Naive thymus-derived CD8-positive, alpha-beta T cell (primary cell): ENCODE measurements at regions of chr17 and their contacts with region 1.

Region 1: DNA sequence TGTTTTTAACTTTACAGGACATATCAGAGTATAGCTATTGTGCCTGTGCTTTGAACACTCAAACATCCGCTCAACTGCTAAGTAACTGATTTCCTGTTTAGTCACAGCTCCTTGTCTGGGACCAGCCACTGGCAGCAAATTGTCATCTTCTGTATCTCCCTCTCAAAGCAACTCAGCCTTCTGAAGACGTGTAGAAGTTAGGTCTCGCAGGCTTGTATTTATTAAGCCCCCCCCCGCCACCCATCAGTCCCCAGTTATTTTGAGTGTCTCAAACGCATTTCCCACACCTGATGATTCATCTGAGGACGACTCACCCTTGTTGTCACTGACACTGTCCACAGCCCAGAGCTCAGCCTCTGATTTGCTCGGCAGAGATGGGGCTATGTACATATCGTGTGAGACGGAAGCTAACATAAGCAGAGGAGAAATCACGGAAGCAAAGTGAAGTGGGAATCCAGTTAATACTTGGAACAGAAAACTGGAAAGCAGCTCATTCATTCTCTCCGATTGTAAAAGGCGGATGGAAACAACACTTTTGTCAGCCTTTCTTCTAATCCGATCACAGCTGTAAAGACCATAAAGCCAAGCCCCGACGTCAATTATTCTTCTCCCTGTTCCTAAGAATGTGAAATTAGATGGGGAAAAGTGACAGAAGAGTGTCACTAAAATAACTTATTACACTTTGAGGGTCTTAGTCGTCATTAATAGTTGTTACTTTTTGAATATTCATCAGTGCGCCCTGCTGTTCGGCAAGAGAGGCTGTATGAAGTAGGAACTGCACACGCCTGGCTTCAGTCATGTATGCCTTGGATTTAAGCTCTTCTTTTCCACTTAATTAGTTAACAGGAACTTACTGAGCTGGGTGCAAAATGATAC is 64.2 kb downstream of the PITPNC1 start:
- DNase-seq: peak; percentile 47 to 89 (median 77)
- ATAC-seq: peak; percentile 87 to 93
- H3K4me3 Mint-ChIP-seq: peak overlapping the region; percentile 72 to 91 (median 83)
- H3K27ac Mint-ChIP-seq: peak overlapping the region; percentile 95 to 100 (median 99)
- H3K4me1 Mint-ChIP-seq: peaks cover 48 to 93% (median 89%) of the 10 kb centered on the region in 4 donors
- H3K27me3 Mint-ChIP-seq: no peaks in the 10 kb centered on the region

Region 2: GRCh38 chr17:67312265-67312664 is 129.0 kb before region 1 on chr17:
- POLR2A ChIA-PET with region 1: no interaction called
- DNase-seq: no peak
- ATAC-seq: no peak
- H3K4me3 Mint-ChIP-seq: no peak overlapping the region
- H3K27ac Mint-ChIP-seq: no peak overlapping the region
- H3K4me1 Mint-ChIP-seq: no peaks in the 10 kb centered on the region
- H3K27me3 Mint-ChIP-seq: peaks cover 0 to 3% (median 0%) of the 10 kb centered on the region in 5 donors

Region 3: GRCh38 chr17:67353929-67354574 is 87.2 kb before region 1 on chr17:
- POLR2A ChIA-PET with region 1: no interaction called
- DNase-seq: no peak
- ATAC-seq: no peak
- H3K4me3 Mint-ChIP-seq: no peak overlapping the region
- H3K27ac Mint-ChIP-seq: peak overlapping the region in 2 of 10 donors; percentile 48 to 51
- H3K4me1 Mint-ChIP-seq: peaks cover 8 to 26% (median 17%) of the 10 kb centered on the region in 4 donors
- H3K27me3 Mint-ChIP-seq: no peaks in the 10 kb centered on the region

Region 4: DNA sequence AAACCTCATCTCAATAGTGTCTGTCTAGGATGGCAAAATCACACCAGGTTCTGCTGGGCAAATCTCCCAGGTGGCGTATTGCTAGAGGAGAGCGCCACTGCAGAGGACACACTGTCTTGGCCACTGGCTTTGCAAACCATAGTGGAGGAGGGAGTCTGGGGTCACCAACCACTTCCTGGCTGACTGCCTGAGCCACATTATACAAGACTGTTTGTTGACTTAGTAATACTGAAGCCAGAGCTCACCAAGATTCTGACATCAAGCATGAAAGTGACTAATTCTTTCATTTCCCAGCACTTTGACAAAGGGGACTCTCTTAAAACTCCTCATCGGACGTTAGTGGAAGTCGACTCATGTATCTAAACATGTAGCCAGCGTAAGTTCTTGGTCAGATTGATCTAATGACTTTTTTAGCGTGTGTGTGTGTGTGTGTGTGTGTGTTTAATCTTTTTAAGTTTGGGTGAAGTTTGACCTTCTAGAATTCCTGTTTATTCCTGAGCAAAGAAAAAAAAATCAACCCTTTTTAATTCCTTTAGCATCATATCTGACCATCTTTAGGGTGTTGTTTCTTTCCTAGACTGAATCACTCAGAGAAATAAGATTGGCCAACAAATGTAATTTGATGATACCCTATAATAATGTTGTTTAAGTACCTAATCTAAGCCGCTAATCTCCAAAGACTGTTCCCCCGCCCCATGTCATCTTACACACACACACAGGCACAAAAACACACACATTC is 50.5 kb before region 1 on chr17:
- POLR2A ChIA-PET with region 1: interaction called, 40 read pairs
- DNase-seq: peak; percentile 32 to 76 (median 54)
- ATAC-seq: peak; percentile 80 to 83
- H3K4me3 Mint-ChIP-seq: peak overlapping the region; percentile 59 to 88 (median 80)
- H3K27ac Mint-ChIP-seq: peak overlapping the region; percentile 90 to 98 (median 94)
- H3K4me1 Mint-ChIP-seq: peaks cover 30 to 90% (median 77%) of the 10 kb centered on the region in 4 donors
- H3K27me3 Mint-ChIP-seq: no peaks in the 10 kb centered on the region

Region 5: GRCh38 chr17:67400193-67400592 is 41.1 kb before region 1 on chr17:
- POLR2A ChIA-PET with region 1: interaction called, 31 read pairs
- DNase-seq: peak in 4 of 10 donors; percentile 50 to 74 (median 66)
- ATAC-seq: peak; percentile 51 to 52
- H3K4me3 Mint-ChIP-seq: peak overlapping the region; percentile 65 to 92 (median 82)
- H3K27ac Mint-ChIP-seq: peak overlapping the region; percentile 91 to 100 (median 97)
- H3K4me1 Mint-ChIP-seq: peaks cover 25 to 85% (median 74%) of the 10 kb centered on the region in 4 donors
- H3K27me3 Mint-ChIP-seq: no peaks in the 10 kb centered on the region

Region 6: DNA sequence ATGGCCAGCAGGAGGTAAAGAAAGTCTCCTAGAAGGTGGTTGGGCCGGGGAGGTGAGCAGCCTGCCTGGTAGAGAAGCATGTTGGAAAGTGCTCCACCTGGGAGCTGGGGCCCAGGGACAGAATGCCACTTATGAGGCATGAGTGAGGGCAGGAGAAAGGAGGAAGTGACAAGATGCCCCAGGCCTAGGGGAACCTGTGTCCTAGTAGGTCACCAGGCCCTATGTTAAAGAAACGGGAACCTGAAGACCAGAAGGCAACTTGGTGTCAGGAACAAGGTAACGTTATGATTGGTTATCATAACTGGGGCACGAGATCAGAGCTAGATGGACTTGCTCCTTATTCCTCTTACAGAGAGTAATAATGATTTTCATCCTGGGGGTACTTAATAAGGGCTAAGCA is 29.9 kb before region 1 on chr17:
- POLR2A ChIA-PET with region 1: interaction called, 10 read pairs
- DNase-seq: no peak
- ATAC-seq: no peak
- H3K4me3 Mint-ChIP-seq: peak overlapping the region in 6 of 10 donors; percentile 0 to 52 (median 32)
- H3K27ac Mint-ChIP-seq: peak overlapping the region; percentile 72 to 91 (median 86)
- H3K4me1 Mint-ChIP-seq: peaks cover 27 to 83% (median 75%) of the 10 kb centered on the region in 4 donors
- H3K27me3 Mint-ChIP-seq: no peaks in the 10 kb centered on the region

Region 7: DNA sequence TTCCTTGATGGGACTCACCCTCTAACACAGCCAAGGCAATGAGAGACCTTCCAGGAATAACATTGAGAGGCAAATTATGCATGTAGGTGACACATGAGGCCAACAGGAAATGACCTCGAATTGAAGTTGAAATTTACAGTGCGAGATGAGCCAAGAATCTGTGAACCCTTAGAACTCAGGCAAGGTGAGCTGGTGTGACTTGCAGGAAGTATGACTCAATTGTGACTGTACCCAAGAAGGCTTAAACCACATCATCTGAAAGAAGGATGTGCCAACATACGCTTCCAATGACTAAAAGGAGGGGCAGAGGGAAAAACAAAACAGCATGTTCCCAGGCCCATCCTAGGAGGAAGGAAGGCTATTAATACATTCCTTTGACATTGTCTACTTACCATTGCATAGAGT is 19.4 kb before region 1 on chr17:
- POLR2A ChIA-PET with region 1: interaction called, 90 read pairs
- DNase-seq: peak in 9 of 10 donors; percentile 52 to 85 (median 71)
- ATAC-seq: peak; percentile 91 to 98
- H3K4me3 Mint-ChIP-seq: peak overlapping the region; percentile 43 to 76 (median 64)
- H3K27ac Mint-ChIP-seq: peak overlapping the region; percentile 94 to 99 (median 98)
- H3K4me1 Mint-ChIP-seq: peaks cover 34 to 95% (median 89%) of the 10 kb centered on the region in 4 donors
- H3K27me3 Mint-ChIP-seq: no peaks in the 10 kb centered on the region

Region 8: GRCh38 chr17:67452681-67453554 is 11.6 kb after region 1 on chr17:
- POLR2A ChIA-PET with region 1: interaction called, 203 read pairs
- DNase-seq: peak in 4 of 10 donors; percentile 59 to 84 (median 75)
- ATAC-seq: peak; percentile 80 to 93
- H3K4me3 Mint-ChIP-seq: peak overlapping the region; percentile 63 to 88 (median 78)
- H3K27ac Mint-ChIP-seq: peak overlapping the region; percentile 89 to 100 (median 96)
- H3K4me1 Mint-ChIP-seq: peaks cover 32 to 97% (median 89%) of the 10 kb centered on the region in 4 donors
- H3K27me3 Mint-ChIP-seq: no peaks in the 10 kb centered on the region

Region 9: GRCh38 chr17:67475236-67475937 is 34.1 kb after region 1 on chr17:
- POLR2A ChIA-PET with region 1: interaction called, 824 read pairs
- DNase-seq: peak; percentile 68 to 91 (median 85)
- ATAC-seq: peak; percentile 70 to 75
- H3K4me3 Mint-ChIP-seq: peak overlapping the region; percentile 66 to 84 (median 76)
- H3K27ac Mint-ChIP-seq: peak overlapping the region; percentile 90 to 98 (median 96)
- H3K4me1 Mint-ChIP-seq: peaks cover 49 to 79% (median 71%) of the 10 kb centered on the region in 4 donors
- H3K27me3 Mint-ChIP-seq: no peaks in the 10 kb centered on the region

Region 10: GRCh38 chr17:67569015-67569451 is 127.7 kb after region 1 on chr17:
- POLR2A ChIA-PET with region 1: no interaction called
- DNase-seq: no peak
- ATAC-seq: no peak
- H3K4me3 Mint-ChIP-seq: no peak overlapping the region
- H3K27ac Mint-ChIP-seq: peak overlapping the region in 4 of 10 donors; percentile 41 to 80 (median 69)
- H3K4me1 Mint-ChIP-seq: peaks cover 26 to 41% (median 29%) of the 10 kb centered on the region in 4 donors
- H3K27me3 Mint-ChIP-seq: no peaks in the 10 kb centered on the region